ENCODE measurements at regions of chr4 and their contacts with region 1.

Region 1: GRCh38 chr4:120354381-120354780 is 287.7 kb upstream of the MAD2L1 start:
- DNase-seq: no peak

Region 2: GRCh38 chr4:120809518-120809917 is 455.1 kb after region 1 on chr4:
- intact Hi-C with region 1: loop called in 1 of 2 experiments (anchors 5 kb)
- DNase-seq: no peak